Endothelial cell of umbilical vein (primary cell): ENCODE measurements at regions of chr10 and their contacts with region 1.

Region 1: DNA sequence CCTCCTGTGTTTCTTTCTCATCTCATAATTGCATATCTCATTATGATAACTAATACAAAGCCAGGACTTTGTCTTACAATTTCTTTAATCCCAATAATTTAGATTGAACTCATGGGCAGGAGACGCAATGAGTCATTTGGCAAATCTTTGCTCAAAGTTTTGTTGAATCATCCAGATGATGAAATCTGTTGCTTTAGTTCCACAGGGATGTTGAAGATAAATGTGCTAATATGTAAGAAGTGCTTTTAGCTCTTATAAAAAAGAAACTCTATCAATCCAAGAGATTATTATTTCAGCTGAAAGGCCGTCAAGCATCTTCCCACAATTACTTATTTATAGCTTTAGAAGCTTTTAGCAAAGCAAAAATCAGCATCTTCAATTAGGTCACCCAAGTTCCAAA is 36.7 kb upstream of the ANK3 start:
- DNase-seq: peak; percentile 71
- H3K4me3 ChIP-seq: no peak overlapping the region
- H3K27ac ChIP-seq: peak overlapping the region; percentile 85
- H3K4me1 ChIP-seq: peaks cover 62% of the 10 kb centered on the region
- H3K27me3 ChIP-seq: no peaks in the 10 kb centered on the region
- CTCF ChIP-seq: no peak
- POLR2A ChIP-seq: no peak

Region 2: DNA sequence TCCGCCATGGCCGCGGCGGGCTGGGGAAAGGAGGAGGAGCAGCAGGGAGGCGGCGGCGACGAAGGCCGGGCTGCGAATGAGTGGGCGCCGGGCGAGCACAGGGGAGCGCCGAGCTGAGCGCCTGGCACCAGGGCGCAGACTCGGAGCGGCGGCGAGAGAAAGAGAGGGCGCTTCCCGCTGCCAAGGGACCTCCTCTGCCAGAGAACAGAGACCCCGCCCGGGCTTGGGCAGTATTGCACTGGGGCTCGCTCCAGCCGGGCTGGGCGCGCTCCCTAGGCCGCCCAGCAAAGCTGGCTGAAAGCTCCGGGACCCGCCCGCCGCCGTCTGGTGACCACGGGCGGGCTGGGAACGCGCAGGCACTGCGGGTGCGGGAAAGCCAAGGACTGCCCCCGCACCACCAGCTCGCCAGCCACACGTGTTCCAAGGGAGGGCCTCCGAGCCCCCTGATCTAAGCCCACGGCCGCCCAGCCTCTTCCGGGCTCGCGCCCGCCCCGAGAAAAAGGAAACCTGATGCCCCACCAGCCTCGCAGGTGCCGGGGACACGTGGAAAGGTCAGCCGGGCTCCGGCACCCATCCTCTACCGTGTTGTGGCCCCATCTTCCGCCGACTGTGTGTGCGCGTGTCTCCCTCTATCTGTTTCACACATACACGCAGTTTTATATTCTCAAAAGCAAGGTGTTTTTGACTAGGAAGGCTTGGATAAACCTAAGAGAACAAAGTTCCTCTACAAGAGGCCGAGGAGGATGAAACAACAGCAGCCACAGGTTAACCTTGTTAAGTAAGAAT is 519.8 kb before region 1 on chr10 and contains the start of gene CCDC6:
- CTCF ChIA-PET with region 1: no interaction called
- POLR2A ChIA-PET with region 1: no interaction called
- dilution Hi-C with region 1: no loop called
- intact Hi-C with region 1: loop called (anchors 10 kb)
- DNase-seq: peak; percentile 96
- H3K4me3 ChIP-seq: peak within 1 kb of the TSS; percentile 68 to 81 (median 77)
- H3K27ac ChIP-seq: peak within 1 kb of the TSS; percentile 75
- H3K4me1 ChIP-seq: peaks cover 32% of the 10 kb centered on the region
- H3K27me3 ChIP-seq: no peaks in the 10 kb centered on the region
- CTCF ChIP-seq: peak; percentile 64 to 82
- POLR2A ChIP-seq: peak; percentile 75
- total RNA-seq, gene CCDC6: 36.8 TPM in 2 replicates

Region 3: GRCh38 chr10:60114765-60115586 is 311.4 kb before region 1 on chr10:
- CTCF ChIA-PET with region 1: interaction called, 11 read pairs
- POLR2A ChIA-PET with region 1: no interaction called
- dilution Hi-C with region 1: no loop called
- intact Hi-C with region 1: no loop called
- DNase-seq: peak; percentile 69
- H3K4me3 ChIP-seq: no peak overlapping the region
- H3K27ac ChIP-seq: no peak overlapping the region
- H3K4me1 ChIP-seq: no peaks in the 10 kb centered on the region
- H3K27me3 ChIP-seq: no peaks in the 10 kb centered on the region
- CTCF ChIP-seq: peak; percentile 49 to 55
- POLR2A ChIP-seq: no peak

Region 4: GRCh38 chr10:60314069-60314940 is 112.1 kb before region 1 on chr10:
- CTCF ChIA-PET with region 1: interaction called, 3 read pairs
- POLR2A ChIA-PET with region 1: no interaction called
- dilution Hi-C with region 1: no loop called
- intact Hi-C with region 1: loop called (anchors 1 kb)
- DNase-seq: peak; percentile 88
- H3K4me3 ChIP-seq: peak overlapping the region in 1 of 3 experiments; percentile 8
- H3K27ac ChIP-seq: peak overlapping the region; percentile 94
- H3K4me1 ChIP-seq: peaks cover 39% of the 10 kb centered on the region
- H3K27me3 ChIP-seq: no peaks in the 10 kb centered on the region
- CTCF ChIP-seq: no peak
- POLR2A ChIP-seq: no peak

Region 5: DNA sequence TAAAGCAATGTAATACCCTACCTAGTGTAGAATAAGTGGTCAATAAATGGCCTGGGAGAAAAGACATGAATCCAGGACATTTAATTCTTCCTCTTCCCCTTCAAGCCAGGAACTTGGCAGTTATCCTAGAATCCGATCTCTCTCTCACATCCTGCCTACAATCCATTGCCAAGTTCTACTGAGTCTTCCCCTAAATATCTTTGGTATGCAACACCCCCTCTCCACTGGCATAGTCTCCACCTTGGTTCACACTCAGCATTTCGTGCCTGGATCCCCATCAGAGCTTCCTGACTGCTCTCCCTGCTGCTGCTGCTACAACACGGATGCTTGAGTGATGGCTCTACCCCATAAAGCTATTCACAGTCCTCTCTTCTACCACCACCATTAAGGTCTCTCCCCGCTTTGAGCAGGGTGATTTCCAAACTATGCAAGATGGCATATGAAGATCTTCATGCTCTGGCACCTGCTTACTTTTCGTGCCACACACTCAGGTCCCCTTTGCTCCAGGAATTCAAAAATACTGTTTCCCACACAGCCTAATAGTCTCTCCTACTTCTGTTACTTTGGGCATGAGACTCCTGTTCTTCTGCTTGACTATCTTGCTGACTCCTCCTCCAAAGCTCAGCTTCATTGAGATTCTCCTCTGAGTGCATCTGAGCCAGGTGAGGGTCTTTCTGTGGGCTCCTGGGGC is 41.5 kb before region 1 on chr10:
- CTCF ChIA-PET with region 1: interaction called, 4 read pairs
- POLR2A ChIA-PET with region 1: no interaction called
- dilution Hi-C with region 1: no loop called
- intact Hi-C with region 1: loop called (anchors 2 kb)
- DNase-seq: peak; percentile 77
- H3K4me3 ChIP-seq: no peak overlapping the region
- H3K27ac ChIP-seq: peak overlapping the region; percentile 40
- H3K4me1 ChIP-seq: peaks cover 31% of the 10 kb centered on the region
- H3K27me3 ChIP-seq: no peaks in the 10 kb centered on the region
- CTCF ChIP-seq: no peak
- POLR2A ChIP-seq: peak; percentile 71

Region 6: GRCh38 chr10:60414805-60415585 is 11.4 kb before region 1 on chr10:
- CTCF ChIA-PET with region 1: interaction called, 4 read pairs
- POLR2A ChIA-PET with region 1: no interaction called
- dilution Hi-C with region 1: no loop called
- intact Hi-C with region 1: loop called (anchors 1 kb)
- DNase-seq: peak; percentile 82
- H3K4me3 ChIP-seq: peak overlapping the region in 1 of 3 experiments; percentile 7
- H3K27ac ChIP-seq: peak overlapping the region; percentile 77
- H3K4me1 ChIP-seq: peaks cover 21% of the 10 kb centered on the region
- H3K27me3 ChIP-seq: no peaks in the 10 kb centered on the region
- CTCF ChIP-seq: no peak
- POLR2A ChIP-seq: no peak